Posterior cingulate gyrus (tissue), 11 donors: ENCODE measurements at regions of chr10 and their contacts with region 1.

Region 1: DNA sequence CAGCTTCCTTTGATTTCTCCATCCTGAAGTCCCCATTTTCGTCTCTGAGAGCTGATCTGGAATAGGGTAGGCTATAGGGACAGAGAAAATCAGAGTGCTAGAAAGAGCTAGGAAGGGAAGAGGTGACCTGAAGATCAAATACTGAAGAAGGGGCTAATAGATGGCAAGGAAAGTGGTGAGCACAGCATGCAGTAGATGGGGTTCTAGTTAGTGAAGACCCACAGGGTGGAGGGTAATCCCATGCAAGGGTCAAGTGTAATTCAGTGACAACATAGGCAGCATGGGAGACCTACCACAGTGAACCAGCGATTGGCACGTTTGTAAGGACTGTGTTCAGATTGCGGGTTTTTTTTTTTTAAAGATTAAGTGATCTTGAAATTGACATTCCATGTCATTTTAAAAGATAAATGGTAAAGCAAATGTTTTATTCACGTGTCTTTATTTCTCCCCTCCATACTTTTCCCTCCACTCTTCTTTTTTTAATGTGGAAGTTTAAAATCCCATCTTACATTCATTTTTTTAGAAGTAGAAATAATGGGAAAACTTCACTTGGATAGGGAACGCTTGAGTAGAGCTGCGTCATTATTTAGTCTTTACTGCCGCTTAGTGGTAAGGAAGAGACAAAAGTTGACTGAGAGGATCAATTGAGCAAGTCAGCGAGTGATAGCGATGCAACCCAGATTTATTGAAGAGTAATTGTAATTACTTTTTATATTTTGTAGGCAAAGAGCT is 21.0 kb upstream of the ABI1 start:
- DNase-seq: peak in 1 of 10 donors; percentile 65

Region 2: GRCh38 chr10:26682931-26683330 is 198.8 kb before region 1 on chr10:
- intact Hi-C with region 1: loop called (anchors 5 kb)
- DNase-seq: no peak

Region 3: GRCh38 chr10:26725837-26726727 is 155.7 kb before region 1 on chr10:
- intact Hi-C with region 1: loop called (anchors 1 kb)
- DNase-seq: peak; percentile 51 to 96 (median 78)